ENCODE measurements at regions of chr1 and their contacts with region 1.

Region 1: DNA sequence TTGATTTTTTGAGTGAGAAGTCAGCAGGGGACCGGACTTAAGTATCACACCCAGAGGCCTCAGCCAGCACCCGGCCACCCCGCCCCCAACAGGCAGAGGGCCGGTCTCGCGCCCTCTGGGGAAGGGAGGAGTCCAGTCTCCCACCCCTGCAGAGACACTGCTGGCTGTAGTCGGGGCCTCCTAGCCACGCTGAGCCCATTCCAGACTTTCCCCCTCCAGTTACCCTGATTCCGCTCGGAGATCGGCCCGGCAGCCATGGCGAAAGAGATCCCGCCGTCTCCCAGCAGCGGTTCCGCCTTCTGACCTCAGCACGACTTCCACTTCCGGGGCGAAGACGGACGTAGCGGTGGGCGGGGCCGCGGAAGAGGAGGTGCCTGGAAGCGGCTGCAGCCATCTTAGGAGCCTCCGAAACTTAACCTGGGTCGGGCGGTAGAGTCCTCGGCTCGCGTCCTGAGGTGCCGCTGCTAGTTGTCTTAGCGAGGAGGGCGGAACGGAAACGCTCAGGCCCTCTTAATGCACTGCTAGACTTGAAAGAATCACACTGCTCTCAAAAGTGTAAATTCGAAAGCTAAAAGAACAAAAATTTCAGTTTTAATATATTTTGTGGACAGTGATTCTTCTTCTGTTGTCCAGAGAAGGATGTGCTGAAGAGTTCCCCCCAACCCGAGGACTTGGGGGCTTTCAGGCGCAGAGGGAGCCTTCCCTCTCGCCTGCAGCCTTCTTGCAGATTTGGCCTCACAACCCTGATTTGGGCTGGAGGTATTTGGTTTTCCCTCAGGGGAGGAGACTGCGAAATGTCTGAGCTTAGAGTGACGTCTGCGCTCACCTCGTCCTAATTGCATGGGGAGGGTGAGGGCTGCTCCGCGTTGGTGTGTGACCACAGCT is at the start of gene SF3B4:
- DNase-seq: peak; percentile 94
- H3K4me3 ChIP-seq: peak within 1 kb of the TSS; percentile 65 to 88 (median 77)
- H3K27ac ChIP-seq: peak within 1 kb of the TSS; percentile 74
- H3K4me1 ChIP-seq: peaks cover 27% of the 10 kb centered on the region
- H3K27me3 ChIP-seq: no peaks in the 10 kb centered on the region
- CTCF ChIP-seq: peak in 1 of 2 donors; percentile 13
- POLR2A ChIP-seq: peak; percentile 97
- total RNA-seq, gene SF3B4: 68.7 and 74.4 TPM in 2 replicates

Region 2: DNA sequence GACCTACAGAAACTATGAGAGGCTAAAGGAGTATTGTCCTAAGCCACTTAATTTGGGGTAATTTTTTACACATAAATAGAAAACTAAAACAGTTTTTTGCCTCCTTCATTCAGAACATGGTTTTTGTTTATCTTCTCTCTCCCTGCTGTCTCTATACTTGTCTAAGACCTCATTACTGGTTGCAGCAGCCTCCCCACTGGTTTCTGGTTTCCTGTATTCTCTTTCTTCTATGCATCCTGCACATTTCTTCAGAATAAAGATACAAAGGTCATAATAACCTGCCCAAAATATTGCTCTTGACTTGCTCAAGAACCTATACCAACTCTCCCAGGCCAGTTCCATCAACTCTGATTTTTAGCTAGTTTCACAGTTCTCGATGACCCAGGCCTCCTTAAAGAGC is 48.2 kb before region 1 on chr1:
- CTCF ChIA-PET with region 1: no interaction called
- POLR2A ChIA-PET with region 1: no interaction called
- dilution Hi-C with region 1: no loop called
- intact Hi-C with region 1: no loop called
- DNase-seq: no peak
- H3K4me3 ChIP-seq: no peak overlapping the region
- H3K27ac ChIP-seq: no peak overlapping the region
- H3K4me1 ChIP-seq: peaks cover 2% of the 10 kb centered on the region
- H3K27me3 ChIP-seq: peaks cover 0 to 4% of the 10 kb centered on the region in 2 experiments
- CTCF ChIP-seq: no peak
- POLR2A ChIP-seq: no peak

Region 3: DNA sequence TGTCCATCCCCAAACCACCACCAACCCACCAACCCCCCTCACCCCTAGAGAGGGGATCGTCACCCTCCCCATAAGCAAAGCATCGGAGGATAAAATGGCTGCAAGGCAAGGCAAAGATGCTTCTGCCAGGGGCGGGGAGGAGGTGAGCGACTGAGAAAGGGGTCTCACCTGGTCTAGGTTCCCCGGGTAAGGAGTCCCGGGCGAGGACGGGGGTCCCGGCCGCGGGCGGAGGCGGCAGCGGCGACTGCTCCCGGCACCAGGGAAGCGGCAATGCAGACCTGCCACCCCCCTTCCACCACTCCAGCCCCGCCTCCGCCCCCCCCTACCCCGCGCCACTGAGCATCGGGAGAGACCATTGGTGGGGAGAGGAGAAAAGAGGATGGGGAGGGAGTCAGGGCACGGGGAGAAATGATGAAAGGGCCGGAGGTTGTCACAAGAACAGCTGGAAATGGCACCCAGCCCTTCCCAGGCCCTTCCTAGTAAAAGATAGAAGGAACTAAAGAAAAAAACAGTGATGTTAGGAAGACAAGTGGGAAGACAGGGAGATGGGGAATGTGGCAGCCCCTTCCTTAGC is 10.1 kb before region 1 on chr1 and contains the start of gene SV2A:
- CTCF ChIA-PET with region 1: no interaction called
- POLR2A ChIA-PET with region 1: no interaction called
- dilution Hi-C with region 1: no loop called
- intact Hi-C with region 1: loop called (anchors 1 kb)
- DNase-seq: no peak
- H3K4me3 ChIP-seq: peak within 1 kb of the TSS in 2 of 3 experiments; percentile 27 to 45
- H3K27ac ChIP-seq: no peak within 1 kb of the TSS
- H3K4me1 ChIP-seq: peaks cover 3% of the 10 kb centered on the region
- H3K27me3 ChIP-seq: peaks cover 17 to 25% of the 10 kb centered on the region in 2 experiments
- CTCF ChIP-seq: no peak
- POLR2A ChIP-seq: no peak
- total RNA-seq, gene SV2A: 3.9 and 5.4 TPM in 2 replicates